Activated CD4-positive, alpha-beta T cell treated with anti-CD3 and anti-CD28 coated beads for 36 hours (primary cell): ENCODE measurements at regions of chr6 and their contacts with region 1.

Region 1: DNA sequence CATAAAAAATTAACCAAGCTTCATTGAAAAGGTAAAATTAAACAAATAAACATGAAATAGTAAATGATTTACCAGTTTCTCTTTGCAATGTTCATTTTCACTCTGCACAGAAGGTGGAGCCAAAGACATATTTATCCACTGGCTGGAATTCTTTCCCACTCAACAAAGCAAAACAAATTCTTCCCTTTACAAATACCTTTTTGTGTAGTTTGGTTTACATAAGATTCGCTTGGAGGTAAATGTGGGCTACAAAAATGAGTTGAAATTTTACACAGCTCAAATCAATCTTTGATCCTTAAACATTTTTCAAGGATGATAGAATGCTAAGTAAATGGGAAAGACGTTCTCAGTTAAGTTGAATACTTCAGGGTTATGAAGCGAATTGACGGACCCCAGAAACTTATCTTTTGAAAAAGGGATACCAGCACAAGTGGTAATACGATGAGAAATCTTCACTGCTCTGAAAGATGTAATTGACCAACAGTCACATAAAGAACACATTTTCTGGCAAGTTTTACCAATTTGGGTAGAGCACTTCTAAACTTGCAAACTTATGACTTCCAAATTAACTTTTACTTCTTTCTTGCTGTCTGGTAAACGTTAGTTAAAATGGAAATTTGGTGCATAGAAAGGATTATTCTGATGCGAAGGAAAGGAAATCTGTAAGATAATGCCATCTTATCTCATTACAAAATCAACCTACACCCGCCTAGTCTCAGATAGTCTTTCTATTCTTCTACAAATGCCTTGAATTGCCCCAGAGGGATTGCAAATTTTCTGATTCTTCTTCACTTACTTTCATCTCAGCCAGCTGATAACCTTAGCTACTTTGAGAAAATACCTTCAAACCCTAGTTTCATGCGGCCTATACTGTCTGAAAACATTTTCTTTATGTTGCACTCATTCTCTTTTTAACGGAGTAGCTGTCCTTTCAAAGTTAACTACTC is 4.7 kb upstream of the GJA1 start:
- DNase-seq: no peak
- ATAC-seq: no peak
- H3K4me3 Mint-ChIP-seq: no peak overlapping the region
- H3K27ac Mint-ChIP-seq: no peak overlapping the region
- H3K4me1 Mint-ChIP-seq: no peaks in the 10 kb centered on the region
- H3K27me3 Mint-ChIP-seq: peaks cover 2% of the 10 kb centered on the region

Region 2: DNA sequence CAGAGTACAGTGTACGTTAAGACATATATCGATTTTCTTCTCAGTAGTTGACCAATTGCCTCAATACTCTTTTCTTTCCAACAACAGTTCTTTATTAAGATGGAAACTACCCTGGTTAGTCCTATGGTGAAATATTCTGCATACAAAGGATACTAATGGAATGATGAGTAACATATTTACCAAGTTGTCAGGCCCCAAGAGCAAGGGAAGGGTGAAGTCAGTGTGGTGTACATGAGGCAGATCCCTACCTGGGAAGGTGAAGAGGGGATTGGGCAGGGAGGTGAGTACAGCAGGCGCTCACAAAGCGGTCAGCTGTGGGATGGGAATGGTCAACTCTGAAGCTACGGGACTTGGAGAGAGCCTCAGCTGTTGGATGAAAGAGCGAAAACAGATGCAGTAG is 34.3 kb after region 1 on chr6:
- CTCF ChIA-PET with region 1: no interaction called
- POLR2A ChIA-PET with region 1: no interaction called
- intact Hi-C with region 1: no loop called
- DNase-seq: no peak
- ATAC-seq: no peak
- H3K4me3 Mint-ChIP-seq: no peak overlapping the region
- H3K27ac Mint-ChIP-seq: no peak overlapping the region
- H3K4me1 Mint-ChIP-seq: no peaks in the 10 kb centered on the region
- H3K27me3 Mint-ChIP-seq: no peaks in the 10 kb centered on the region

Region 3: DNA sequence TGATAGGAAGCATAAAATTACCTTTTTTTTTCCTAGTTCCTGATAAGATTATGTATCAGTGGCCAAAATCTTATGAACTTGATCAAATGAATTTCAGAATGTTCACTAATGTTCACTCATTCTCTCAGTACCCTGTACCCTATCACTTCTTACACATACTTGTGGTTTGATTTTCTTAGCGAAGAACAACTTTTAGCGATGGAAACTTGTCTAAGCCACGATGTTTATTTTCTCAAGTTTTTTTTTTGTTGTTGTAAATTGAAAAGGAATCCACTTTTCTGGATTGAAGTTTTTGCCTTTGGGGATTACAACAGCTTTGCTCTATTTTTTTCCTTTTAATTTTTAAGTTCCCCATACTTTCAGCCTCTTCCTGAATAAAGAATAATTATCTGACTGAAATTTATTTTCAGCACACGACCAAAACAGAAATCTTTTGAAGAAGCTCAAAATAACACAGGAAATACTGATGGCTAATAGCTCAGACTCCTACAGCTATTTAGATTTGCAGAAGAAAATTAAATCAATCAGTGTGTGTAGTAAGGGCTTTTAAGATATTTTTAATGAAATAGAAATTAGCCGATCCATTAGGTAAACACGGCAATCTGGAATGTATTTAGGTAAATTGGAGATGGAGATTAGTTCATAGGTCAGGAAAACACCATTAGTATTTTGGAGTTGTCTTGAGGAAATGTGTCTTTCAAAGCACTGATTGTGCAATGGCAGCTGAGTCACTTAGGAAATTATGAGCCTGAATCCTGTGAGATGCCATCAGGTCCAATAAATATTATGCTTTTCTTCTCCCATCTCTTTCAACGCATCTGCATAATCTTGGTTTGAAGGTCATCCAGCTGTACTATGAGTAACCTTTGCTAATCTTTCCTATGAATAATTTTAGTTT is 222.2 kb after region 1 on chr6:
- CTCF ChIA-PET with region 1: no interaction called
- POLR2A ChIA-PET with region 1: no interaction called
- intact Hi-C with region 1: no loop called
- DNase-seq: no peak
- ATAC-seq: no peak
- H3K4me3 Mint-ChIP-seq: no peak overlapping the region
- H3K27ac Mint-ChIP-seq: peak overlapping the region; percentile 25
- H3K4me1 Mint-ChIP-seq: peaks cover 36% of the 10 kb centered on the region
- H3K27me3 Mint-ChIP-seq: no peaks in the 10 kb centered on the region

Region 4: GRCh38 chr6:121849477-121849876 is 418.7 kb after region 1 on chr6:
- CTCF ChIA-PET with region 1: interaction called, 5 read pairs
- POLR2A ChIA-PET with region 1: no interaction called
- intact Hi-C with region 1: loop called (anchors 2 kb)
- DNase-seq: peak; percentile 52
- ATAC-seq: peak; percentile 70
- H3K4me3 Mint-ChIP-seq: no peak overlapping the region
- H3K27ac Mint-ChIP-seq: no peak overlapping the region
- H3K4me1 Mint-ChIP-seq: peaks cover 14% of the 10 kb centered on the region
- H3K27me3 Mint-ChIP-seq: no peaks in the 10 kb centered on the region

Region 5: GRCh38 chr6:122033539-122034181 is 602.9 kb after region 1 on chr6:
- CTCF ChIA-PET with region 1: no interaction called
- POLR2A ChIA-PET with region 1: no interaction called
- intact Hi-C with region 1: loop called (anchors 1 to 2 kb)
- DNase-seq: no peak
- ATAC-seq: peak; percentile 65
- H3K4me3 Mint-ChIP-seq: no peak overlapping the region
- H3K27ac Mint-ChIP-seq: no peak overlapping the region
- H3K4me1 Mint-ChIP-seq: no peaks in the 10 kb centered on the region
- H3K27me3 Mint-ChIP-seq: peaks cover 6% of the 10 kb centered on the region

Region 6: DNA sequence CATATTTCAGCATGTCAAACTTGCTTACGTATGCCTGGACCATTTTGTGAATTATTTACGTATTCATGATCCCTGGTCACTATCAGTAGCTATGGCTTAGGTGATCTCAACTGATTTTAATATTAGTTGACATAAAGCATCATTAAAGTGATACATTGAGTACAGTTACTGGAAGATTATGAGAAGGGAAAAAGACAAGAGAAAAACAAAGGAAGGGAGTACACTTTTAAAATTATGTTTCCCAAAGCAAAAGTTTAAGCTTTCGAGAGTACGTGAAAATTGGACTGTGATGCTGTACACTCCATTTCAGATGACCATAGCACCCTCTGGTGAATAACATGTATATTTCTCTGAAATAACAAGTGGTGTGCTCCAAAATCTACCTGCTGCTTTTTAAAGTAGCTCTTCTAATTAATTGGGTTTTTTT is 753.6 kb after region 1 on chr6:
- CTCF ChIA-PET with region 1: no interaction called
- POLR2A ChIA-PET with region 1: no interaction called
- intact Hi-C with region 1: loop called in 1 of 2 experiments (anchors 10 kb)
- DNase-seq: no peak
- ATAC-seq: no peak
- H3K4me3 Mint-ChIP-seq: no peak overlapping the region
- H3K27ac Mint-ChIP-seq: no peak overlapping the region
- H3K4me1 Mint-ChIP-seq: no peaks in the 10 kb centered on the region
- H3K27me3 Mint-ChIP-seq: no peaks in the 10 kb centered on the region